H1 (cell line): ENCODE measurements at regions of chr3 and their contacts with region 1.

Region 1: DNA sequence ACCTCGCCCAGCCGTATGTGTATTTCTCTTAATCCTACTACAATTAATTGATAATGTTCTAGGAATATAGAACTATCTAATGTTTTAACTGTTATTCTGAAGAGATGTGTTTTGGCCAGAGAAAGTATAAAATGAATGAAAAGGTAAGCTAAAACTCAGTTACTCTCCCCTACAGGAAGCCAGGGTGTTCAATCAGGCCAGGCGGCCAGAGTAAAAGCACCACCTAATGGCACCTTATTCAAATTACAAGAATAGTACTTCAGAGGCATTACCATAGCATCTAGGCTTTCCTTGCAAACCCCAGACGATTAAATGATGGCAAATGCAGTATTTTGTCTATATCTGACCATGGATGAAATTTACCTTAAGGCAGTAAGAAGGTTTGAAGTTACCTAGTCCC is 10.4 kb downstream of the SLC12A8 start:
- DNase-seq: no peak
- H3K4me3 ChIP-seq: no peak overlapping the region
- H3K27ac ChIP-seq: no peak overlapping the region
- H3K4me1 ChIP-seq: no peaks in the 10 kb centered on the region
- H3K27me3 ChIP-seq: no peaks in the 10 kb centered on the region
- CTCF ChIP-seq: peak in 2 of 3 experiments; percentile 57 to 70; a peak in 3 of 4 replicates
- EP300 ChIP-seq: no peak
- POLR2A ChIP-seq: no peak
- RAD21 ChIP-seq: peak; percentile 77 to 81

Region 2: GRCh38 chr3:125186800-125187598 is 15.2 kb before region 1 on chr3:
- CTCF ChIA-PET with region 1: interaction called, 17 read pairs
- POLR2A ChIA-PET with region 1: no interaction called
- DNase-seq: peak in 1 of 2 experiments; percentile 52
- H3K4me3 ChIP-seq: no peak overlapping the region
- H3K27ac ChIP-seq: no peak overlapping the region
- H3K4me1 ChIP-seq: peaks cover 5 to 11% (median 9%) of the 10 kb centered on the region in 4 experiments
- H3K27me3 ChIP-seq: no peaks in the 10 kb centered on the region
- CTCF ChIP-seq: no peak
- EP300 ChIP-seq: no peak
- POLR2A ChIP-seq: no peak
- RAD21 ChIP-seq: no peak

Region 3: GRCh38 chr3:125212509-125213244 is 10.5 kb after region 1 on chr3 and contains the start of gene SLC12A8:
- CTCF ChIA-PET with region 1: interaction called, 11 read pairs
- POLR2A ChIA-PET with region 1: interaction called, 7 read pairs
- DNase-seq: peak in 1 of 2 experiments; percentile 72
- H3K4me3 ChIP-seq: peak within 1 kb of the TSS; percentile 61 to 81 (median 65)
- H3K27ac ChIP-seq: peak within 1 kb of the TSS; percentile 8; the same call in 1 of the 2 replicates
- H3K4me1 ChIP-seq: peaks cover 8 to 21% (median 14%) of the 10 kb centered on the region in 4 experiments
- H3K27me3 ChIP-seq: peaks cover 0 to 5% (median 3%) of the 10 kb centered on the region in 4 experiments; a peak in 3 of 7 replicates
- CTCF ChIP-seq: no peak
- EP300 ChIP-seq: no peak
- POLR2A ChIP-seq: peak in 1 of 2 experiments; percentile 54; a peak in 1 of 3 replicates
- RAD21 ChIP-seq: no peak
- total RNA-seq, gene SLC12A8: 12.0 and 13.7 TPM in 2 replicates

Region 4: DNA sequence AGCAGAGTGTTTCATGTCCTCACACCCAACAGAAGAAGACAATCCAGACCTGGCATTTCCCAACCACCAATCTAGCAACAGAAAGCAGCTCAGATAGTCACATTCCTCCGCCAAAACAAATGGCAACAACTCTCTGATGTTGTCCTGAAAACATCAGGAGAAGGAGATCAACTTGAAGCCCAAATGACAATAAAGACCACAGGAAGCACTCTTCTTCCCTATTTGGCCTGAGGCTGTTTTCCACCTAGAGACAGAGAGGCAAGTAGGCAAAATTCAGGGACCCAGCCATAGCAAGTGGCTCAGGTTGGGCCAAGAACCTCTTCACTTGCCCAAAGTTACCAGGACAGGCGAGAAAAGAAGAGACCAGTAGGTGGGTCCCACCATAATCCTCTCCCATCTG is 137.9 kb after region 1 on chr3:
- CTCF ChIA-PET with region 1: no interaction called
- POLR2A ChIA-PET with region 1: no interaction called
- DNase-seq: no peak
- H3K4me3 ChIP-seq: no peak overlapping the region
- H3K27ac ChIP-seq: no peak overlapping the region
- H3K4me1 ChIP-seq: no peaks in the 10 kb centered on the region
- H3K27me3 ChIP-seq: no peaks in the 10 kb centered on the region
- CTCF ChIP-seq: no peak
- EP300 ChIP-seq: no peak
- POLR2A ChIP-seq: no peak
- RAD21 ChIP-seq: no peak